ENCODE measurements at regions of chr16 and their contacts with region 1.

Region 1: GRCh38 chr16:30445408-30446202 is at the start of gene SEPHS2:
- DNase-seq: peak; percentile 95 to 99 (median 98)
- ATAC-seq: peak; percentile 89 to 96 (median 92)
- H3K4me3 ChIP-seq: peak within 1 kb of the TSS; percentile 64 to 96 (median 82)
- H3K27ac ChIP-seq: peak within 1 kb of the TSS; percentile 88 to 95 (median 94)
- H3K4me1 ChIP-seq: peaks cover 22 to 43% (median 25%) of the 10 kb centered on the region in 3 donors
- H3K27me3 ChIP-seq: no peaks in the 10 kb centered on the region
- CTCF ChIP-seq: no peak
- total RNA-seq, gene SEPHS2: 17.5 to 35.4 (median 25.4) TPM

Region 2: DNA sequence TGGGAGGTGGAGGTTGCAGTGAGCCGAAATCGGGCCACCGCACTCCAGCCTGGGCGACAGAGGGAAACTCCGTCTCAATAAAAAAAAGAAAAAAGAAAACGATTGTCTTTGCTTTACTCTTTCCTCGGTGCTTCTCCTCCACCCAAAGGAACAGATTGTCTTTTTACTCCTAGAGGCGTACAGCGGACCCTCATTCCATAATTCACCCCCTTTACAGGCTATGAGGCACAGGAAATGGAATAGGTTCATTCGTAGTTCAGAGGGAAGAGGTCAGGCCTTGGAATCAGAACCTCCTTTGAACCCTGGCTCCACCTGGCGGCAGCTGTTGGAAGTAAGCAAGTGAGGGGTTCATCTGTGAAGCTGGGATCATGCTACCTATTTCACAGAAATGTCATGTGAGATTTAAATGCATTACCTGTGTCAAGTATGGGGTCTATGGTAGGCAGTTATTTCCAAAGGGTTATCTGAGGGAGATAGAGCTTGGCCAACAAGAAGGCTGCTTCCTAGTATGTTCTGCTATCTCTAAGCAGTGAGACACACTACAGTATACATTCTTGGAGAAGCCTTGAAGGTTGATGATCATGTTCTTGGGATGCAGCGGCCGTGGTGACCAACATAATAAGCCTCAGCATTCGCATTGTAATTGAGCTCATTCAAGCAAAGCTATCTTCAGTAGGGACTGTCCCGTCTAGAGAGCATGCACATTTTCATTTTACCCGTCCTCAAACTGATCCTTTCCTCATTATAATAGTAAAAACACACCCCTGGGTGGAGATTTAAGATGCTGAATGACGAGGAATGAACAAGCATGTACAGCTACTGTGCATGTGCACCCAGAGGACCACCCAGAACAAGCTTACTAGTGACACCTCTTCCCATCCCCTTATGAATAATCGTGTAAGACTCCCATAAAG is 183.3 kb after region 1 on chr16:
- intact Hi-C with region 1: loop called in 1 of 3 experiments (anchors 10 kb)
- DNase-seq: peak; percentile 74 to 97 (median 88)
- ATAC-seq: peak; percentile 89 to 99 (median 96)
- H3K4me3 ChIP-seq: peak overlapping the region in 1 of 4 donors; percentile 8
- H3K27ac ChIP-seq: peak overlapping the region in 1 of 4 donors; percentile 19
- H3K4me1 ChIP-seq: no peaks in the 10 kb centered on the region
- H3K27me3 ChIP-seq: no peaks in the 10 kb centered on the region
- CTCF ChIP-seq: peak; percentile 69 to 88 (median 84)

Measured in pancreas (tissue), 10 donors.